B cell (primary cell): ENCODE measurements at regions of chr1 and their contacts with region 1.

Region 1: GRCh38 chr1:28248283-28249012 is 10.9 kb upstream of the SESN2 start:
- DNase-seq: peak; percentile 86
- ATAC-seq: peak; percentile 16
- H3K4me3 ChIP-seq: peak overlapping the region in 4 of 5 experiments; percentile 15 to 45 (median 38)
- H3K4me3 Mint-ChIP-seq: peak overlapping the region; percentile 83
- H3K27ac ChIP-seq: peak overlapping the region; percentile 74 to 77
- H3K27ac Mint-ChIP-seq: peak overlapping the region; percentile 88
- H3K4me1 ChIP-seq: peaks cover 43 to 51% of the 10 kb centered on the region in 2 donors
- H3K4me1 Mint-ChIP-seq: peaks cover 49% of the 10 kb centered on the region
- H3K27me3 ChIP-seq: no peaks in the 10 kb centered on the region
- H3K27me3 Mint-ChIP-seq: no peaks in the 10 kb centered on the region
- CTCF ChIP-seq: peak; percentile 86

Region 2: GRCh38 chr1:28259307-28260167 is 11.1 kb after region 1 on chr1 and contains the start of gene SESN2:
- CTCF ChIA-PET with region 1: interaction called, 64 read pairs
- POLR2A ChIA-PET with region 1: interaction called, 10 read pairs
- intact Hi-C with region 1: loop called (anchors 1 kb)
- DNase-seq: peak; percentile 98
- ATAC-seq: peak; percentile 99
- H3K4me3 ChIP-seq: peak within 1 kb of the TSS; percentile 65 to 96 (median 92)
- H3K4me3 Mint-ChIP-seq: peak within 1 kb of the TSS; percentile 84
- H3K27ac ChIP-seq: peak within 1 kb of the TSS in 1 of 2 donors; percentile 64
- H3K27ac Mint-ChIP-seq: peak within 1 kb of the TSS; percentile 75
- H3K4me1 ChIP-seq: peaks cover 22% of the 10 kb centered on the region in 2 donors
- H3K4me1 Mint-ChIP-seq: peaks cover 19% of the 10 kb centered on the region
- H3K27me3 ChIP-seq: peaks cover 0 to 4% (median 1%) of the 10 kb centered on the region in 4 experiments
- H3K27me3 Mint-ChIP-seq: peaks cover 16% of the 10 kb centered on the region
- CTCF ChIP-seq: no peak
- total RNA-seq, gene SESN2: 4.5 and 4.8 TPM in 2 replicates

Region 3: GRCh38 chr1:28369371-28370238 is 121.2 kb after region 1 on chr1 and contains the start of gene PHACTR4:
- CTCF ChIA-PET with region 1: interaction called, 13 read pairs
- POLR2A ChIA-PET with region 1: no interaction called
- intact Hi-C with region 1: no loop called
- DNase-seq: peak; percentile 85
- ATAC-seq: peak; percentile 90
- H3K4me3 ChIP-seq: peak within 1 kb of the TSS; percentile 65 to 96 (median 88)
- H3K4me3 Mint-ChIP-seq: peak within 1 kb of the TSS; percentile 97
- H3K27ac ChIP-seq: peak within 1 kb of the TSS; percentile 75 to 81
- H3K27ac Mint-ChIP-seq: peak within 1 kb of the TSS; percentile 98
- H3K4me1 ChIP-seq: peaks cover 11 to 19% of the 10 kb centered on the region in 2 donors
- H3K4me1 Mint-ChIP-seq: peaks cover 26% of the 10 kb centered on the region
- H3K27me3 ChIP-seq: no peaks in the 10 kb centered on the region
- H3K27me3 Mint-ChIP-seq: no peaks in the 10 kb centered on the region
- CTCF ChIP-seq: no peak
- total RNA-seq, gene PHACTR4: 41.6 and 42.7 TPM in 2 replicates

Region 4: DNA sequence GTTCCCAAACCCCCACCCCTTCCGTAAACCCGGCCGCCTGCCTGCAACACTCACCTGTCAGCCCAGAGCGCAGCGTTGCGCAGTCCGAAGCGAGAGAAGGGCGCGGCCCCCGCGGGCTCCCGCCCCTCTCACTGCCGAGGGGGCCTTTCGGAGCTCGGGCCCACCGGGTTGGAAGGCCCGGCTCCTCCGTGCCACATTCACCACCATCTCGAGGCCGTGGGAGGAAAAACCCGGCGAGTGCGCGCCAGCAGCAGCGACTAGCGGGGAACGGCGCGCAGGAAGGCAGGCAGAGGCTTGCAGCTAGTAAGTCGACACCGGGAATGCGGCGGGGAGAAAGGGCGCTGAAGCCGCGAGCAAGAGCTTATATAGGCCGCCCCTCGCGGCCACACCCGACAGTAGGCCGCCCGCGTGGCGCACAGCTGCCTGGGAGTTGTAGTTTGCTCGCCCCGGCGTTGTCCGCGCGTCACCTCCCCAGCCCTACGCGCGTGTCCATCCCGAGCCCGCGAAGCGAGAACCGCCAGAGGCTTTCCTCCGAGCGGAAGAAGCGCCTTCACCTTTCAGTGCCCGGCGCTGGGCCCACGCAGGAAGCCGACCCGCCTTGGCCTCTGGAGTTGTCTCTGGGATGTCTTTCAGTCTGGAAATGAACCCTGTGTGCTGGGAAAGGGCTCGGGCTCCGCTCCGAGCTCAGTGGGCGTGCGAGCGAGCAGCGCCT is 333.2 kb after region 1 on chr1:
- CTCF ChIA-PET with region 1: interaction called, 7 read pairs
- POLR2A ChIA-PET with region 1: interaction called, 11 read pairs
- intact Hi-C with region 1: loop called (anchors 2 kb)
- DNase-seq: peak; percentile 96
- ATAC-seq: peak; percentile 92
- H3K4me3 ChIP-seq: peak overlapping the region; percentile 69 to 99 (median 94)
- H3K4me3 Mint-ChIP-seq: peak overlapping the region; percentile 96
- H3K27ac ChIP-seq: peak overlapping the region; percentile 69 to 82
- H3K27ac Mint-ChIP-seq: peak overlapping the region; percentile 95
- H3K4me1 ChIP-seq: peaks cover 15 to 35% of the 10 kb centered on the region in 2 donors
- H3K4me1 Mint-ChIP-seq: peaks cover 40% of the 10 kb centered on the region
- H3K27me3 ChIP-seq: no peaks in the 10 kb centered on the region
- H3K27me3 Mint-ChIP-seq: no peaks in the 10 kb centered on the region
- CTCF ChIP-seq: peak; percentile 7

Region 5: DNA sequence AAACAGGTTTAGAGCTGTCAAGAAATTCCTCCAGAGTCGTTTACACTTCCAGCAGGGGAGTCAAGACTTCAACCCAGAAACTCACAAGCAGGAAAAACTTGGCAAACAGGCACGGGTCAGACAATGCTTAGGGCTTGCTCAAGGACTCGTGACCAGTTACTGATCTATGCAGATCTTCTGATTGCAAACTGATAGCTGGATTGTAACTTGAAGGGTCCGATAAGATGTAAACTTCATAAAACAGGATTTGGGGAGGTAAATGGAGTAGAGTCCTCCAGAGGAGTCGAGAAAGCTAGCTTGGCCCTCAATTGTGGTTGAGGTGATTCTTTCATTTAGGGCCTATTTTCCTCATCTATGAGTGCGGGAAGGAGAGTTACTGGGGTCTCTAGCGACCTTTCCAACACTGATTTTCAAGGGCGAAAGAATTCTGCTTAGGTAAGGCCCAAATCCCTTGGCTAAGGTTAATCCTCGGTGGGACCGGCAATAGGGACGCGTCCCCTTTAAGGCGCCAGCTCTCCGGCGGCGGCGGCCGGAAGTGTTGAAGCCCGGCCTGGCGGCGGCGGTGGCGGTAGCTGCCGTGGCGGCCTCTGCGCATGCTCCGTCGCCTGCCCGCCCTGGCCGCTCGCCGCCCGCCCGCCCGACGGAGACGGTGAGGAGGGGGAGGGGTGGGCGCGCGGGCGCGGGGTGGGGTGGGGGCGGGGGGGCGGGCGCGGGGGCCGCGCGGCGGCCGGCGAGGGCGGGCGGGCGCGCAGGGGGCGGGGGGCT is 419.9 kb after region 1 on chr1 and contains the start of gene GMEB1:
- CTCF ChIA-PET with region 1: no interaction called
- POLR2A ChIA-PET with region 1: no interaction called
- intact Hi-C with region 1: loop called (anchors 5 kb)
- DNase-seq: peak; percentile 88
- ATAC-seq: peak; percentile 65
- H3K4me3 ChIP-seq: peak within 1 kb of the TSS; percentile 68 to 95 (median 94)
- H3K4me3 Mint-ChIP-seq: peak within 1 kb of the TSS; percentile 94
- H3K27ac ChIP-seq: peak within 1 kb of the TSS; percentile 95 to 98
- H3K27ac Mint-ChIP-seq: peak within 1 kb of the TSS; percentile 99
- H3K4me1 ChIP-seq: peaks cover 5 to 24% of the 10 kb centered on the region in 2 donors
- H3K4me1 Mint-ChIP-seq: peaks cover 19% of the 10 kb centered on the region
- H3K27me3 ChIP-seq: no peaks in the 10 kb centered on the region
- H3K27me3 Mint-ChIP-seq: no peaks in the 10 kb centered on the region
- CTCF ChIP-seq: no peak
- total RNA-seq, gene GMEB1: 21.7 and 24.8 TPM in 2 replicates

Region 6: GRCh38 chr1:29181413-29182225 is 933.2 kb after region 1 on chr1 and contains the start of gene SRSF4:
- CTCF ChIA-PET with region 1: no interaction called
- POLR2A ChIA-PET with region 1: no interaction called
- intact Hi-C with region 1: loop called (anchors 5 kb)
- DNase-seq: peak; percentile 99
- ATAC-seq: peak; percentile 93
- H3K4me3 ChIP-seq: peak within 1 kb of the TSS; percentile 85 to 100 (median 95)
- H3K4me3 Mint-ChIP-seq: peak within 1 kb of the TSS; percentile 94
- H3K27ac ChIP-seq: peak within 1 kb of the TSS; percentile 99
- H3K27ac Mint-ChIP-seq: peak within 1 kb of the TSS; percentile 95
- H3K4me1 ChIP-seq: peaks cover 32 to 42% of the 10 kb centered on the region in 2 donors
- H3K4me1 Mint-ChIP-seq: peaks cover 42% of the 10 kb centered on the region
- H3K27me3 ChIP-seq: no peaks in the 10 kb centered on the region
- H3K27me3 Mint-ChIP-seq: no peaks in the 10 kb centered on the region
- CTCF ChIP-seq: peak; percentile 79
- total RNA-seq, gene SRSF4: 93.5 and 100 TPM in 2 replicates